Naive thymus-derived CD4-positive, alpha-beta T cell (primary cell): ENCODE measurements at regions of chr13 and their contacts with region 1.

Region 1: GRCh38 chr13:29923554-29924481 is 73.4 kb upstream of the UBL3 start:
- DNase-seq: peak in 5 of 9 donors; percentile 20 to 55 (median 21)
- ATAC-seq: peak; percentile 86
- H3K4me3 ChIP-seq: no peak overlapping the region
- H3K4me3 Mint-ChIP-seq: no peak overlapping the region
- H3K27ac ChIP-seq: no peak overlapping the region
- H3K27ac Mint-ChIP-seq: peak overlapping the region in 1 of 9 donors; percentile 32
- H3K4me1 ChIP-seq: no peaks in the 10 kb centered on the region
- H3K4me1 Mint-ChIP-seq: peaks cover 0 to 36% (median 13%) of the 10 kb centered on the region in 7 donors
- H3K27me3 ChIP-seq: no peaks in the 10 kb centered on the region
- H3K27me3 Mint-ChIP-seq: peaks cover 0 to 3% (median under 1%) of the 10 kb centered on the region in 5 donors

Region 2: GRCh38 chr13:29771247-29771646 is 152.6 kb before region 1 on chr13:
- CTCF ChIA-PET with region 1: interaction called, 8 read pairs
- POLR2A ChIA-PET with region 1: no interaction called
- intact Hi-C with region 1: loop called in 1 of 2 experiments (anchors 5 kb)
- DNase-seq: peak in 7 of 9 donors; percentile 31 to 67 (median 52)
- ATAC-seq: peak; percentile 77
- H3K4me3 ChIP-seq: no peak overlapping the region
- H3K4me3 Mint-ChIP-seq: no peak overlapping the region
- H3K27ac ChIP-seq: no peak overlapping the region
- H3K27ac Mint-ChIP-seq: peak overlapping the region in 1 of 9 donors; percentile 11
- H3K4me1 ChIP-seq: no peaks in the 10 kb centered on the region
- H3K4me1 Mint-ChIP-seq: peaks cover 0 to 14% (median 4%) of the 10 kb centered on the region in 7 donors
- H3K27me3 ChIP-seq: no peaks in the 10 kb centered on the region
- H3K27me3 Mint-ChIP-seq: no peaks in the 10 kb centered on the region

Region 3: GRCh38 chr13:30241532-30241931 is 317.7 kb after region 1 on chr13:
- CTCF ChIA-PET with region 1: no interaction called
- POLR2A ChIA-PET with region 1: no interaction called
- intact Hi-C with region 1: no loop called
- DNase-seq: no peak
- ATAC-seq: no peak
- H3K4me3 ChIP-seq: no peak overlapping the region
- H3K4me3 Mint-ChIP-seq: no peak overlapping the region
- H3K27ac ChIP-seq: no peak overlapping the region
- H3K27ac Mint-ChIP-seq: no peak overlapping the region
- H3K4me1 ChIP-seq: no peaks in the 10 kb centered on the region
- H3K4me1 Mint-ChIP-seq: peaks cover 0 to 5% (median 0%) of the 10 kb centered on the region in 7 donors
- H3K27me3 ChIP-seq: no peaks in the 10 kb centered on the region
- H3K27me3 Mint-ChIP-seq: no peaks in the 10 kb centered on the region